Esophagus muscularis mucosa (tissue), 4 donors: ENCODE measurements at regions of chr22 and their contacts with region 1.

Region 1: GRCh38 chr22:31107178-31107893 is at the start of gene SELENOM:
- DNase-seq: peak; percentile 99
- H3K4me3 ChIP-seq: peak within 1 kb of the TSS; percentile 90 to 95 (median 91)
- H3K27ac ChIP-seq: peak within 1 kb of the TSS; percentile 98 to 99 (median 99)
- H3K4me1 ChIP-seq: peaks cover 47 to 54% (median 52%) of the 10 kb centered on the region in 4 donors
- H3K27me3 ChIP-seq: no peaks in the 10 kb centered on the region
- CTCF ChIP-seq: peak; percentile 95 to 99 (median 97)
- EP300 ChIP-seq: no peak
- POLR2A ChIP-seq: peak; percentile 83
- total RNA-seq, gene SELENOM: 1,118 to 1,733 (median 1,416) TPM

Region 2: DNA sequence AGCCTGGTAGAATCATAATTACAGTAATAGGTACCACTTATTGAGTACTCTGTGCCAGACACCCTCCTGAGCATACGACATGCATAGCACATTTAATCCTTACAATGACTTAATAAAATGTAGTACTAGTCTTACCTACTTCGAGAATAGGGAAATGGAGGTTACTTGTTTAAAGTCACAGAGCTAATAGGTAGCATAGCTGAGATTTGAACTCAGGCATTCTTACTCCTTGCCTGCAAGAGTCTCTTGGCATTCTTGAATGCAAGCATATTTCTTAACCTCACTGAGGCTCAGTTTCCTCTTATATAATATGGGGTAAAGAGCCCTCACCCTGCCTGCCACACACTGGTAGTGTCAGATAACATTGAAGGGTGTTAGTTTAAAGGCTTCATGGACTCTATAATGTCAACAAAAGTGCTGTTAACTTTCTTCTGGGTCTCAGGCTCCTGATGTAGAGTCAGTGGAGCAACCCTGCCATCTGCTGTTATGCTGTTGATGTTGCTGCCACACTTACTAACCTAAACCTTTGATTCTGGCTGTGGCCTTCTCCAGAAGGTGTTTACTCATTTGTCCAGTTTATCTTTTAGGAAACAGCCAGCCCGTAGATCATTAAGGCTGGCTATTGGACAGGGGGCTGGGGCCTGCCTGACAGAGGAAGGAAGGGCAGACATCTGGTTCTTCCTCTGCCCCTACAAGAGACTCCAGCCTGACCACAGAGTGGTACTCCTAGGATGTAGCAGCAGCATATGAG is 123.7 kb after region 1 on chr22:
- intact Hi-C with region 1: loop called (anchors 5 kb)
- DNase-seq: no peak
- H3K4me3 ChIP-seq: no peak overlapping the region
- H3K27ac ChIP-seq: peak overlapping the region; percentile 67 to 81 (median 74)
- H3K4me1 ChIP-seq: peaks cover 40 to 65% (median 55%) of the 10 kb centered on the region in 4 donors
- H3K27me3 ChIP-seq: no peaks in the 10 kb centered on the region
- CTCF ChIP-seq: peak; percentile 78 to 89 (median 80)
- EP300 ChIP-seq: no peak
- POLR2A ChIP-seq: no peak